ENCODE measurements at regions of chr6 and their contacts with region 1.

Region 1: GRCh38 chr6:31087494-31088089 is 24.8 kb downstream of the C6orf15 start:
- DNase-seq: peak; percentile 75 to 83 (median 81)
- H3K4me3 ChIP-seq: no peak overlapping the region
- H3K4me3 Mint-ChIP-seq: no peak overlapping the region
- H3K27ac ChIP-seq: no peak overlapping the region
- H3K27ac Mint-ChIP-seq: no peak overlapping the region
- H3K4me1 ChIP-seq: peaks cover 0 to 7% of the 10 kb centered on the region in 2 donors
- H3K4me1 Mint-ChIP-seq: peaks cover 11% of the 10 kb centered on the region
- H3K27me3 ChIP-seq: peaks cover 5 to 11% of the 10 kb centered on the region in 2 donors
- H3K27me3 Mint-ChIP-seq: peaks cover 4 to 11% (median 9%) of the 10 kb centered on the region in 3 donors
- CTCF ChIP-seq: peak; percentile 86

Region 2: GRCh38 chr6:30828027-30828960 is 259.3 kb before region 1 on chr6:
- intact Hi-C with region 1: loop called (anchors 5 kb)
- DNase-seq: peak; percentile 64 to 77 (median 77)
- H3K4me3 ChIP-seq: peak overlapping the region in 2 of 3 experiments; percentile 8 to 62
- H3K4me3 Mint-ChIP-seq: peak overlapping the region; percentile 68 to 77
- H3K27ac ChIP-seq: peak overlapping the region; percentile 5 to 46
- H3K27ac Mint-ChIP-seq: peak overlapping the region; percentile 31 to 90 (median 68)
- H3K4me1 ChIP-seq: peaks cover 59 to 68% of the 10 kb centered on the region in 2 donors
- H3K4me1 Mint-ChIP-seq: peaks cover 68% of the 10 kb centered on the region
- H3K27me3 ChIP-seq: no peaks in the 10 kb centered on the region
- H3K27me3 Mint-ChIP-seq: peaks cover 1 to 2% (median 2%) of the 10 kb centered on the region in 3 donors
- CTCF ChIP-seq: peak; percentile 86

Region 3: DNA sequence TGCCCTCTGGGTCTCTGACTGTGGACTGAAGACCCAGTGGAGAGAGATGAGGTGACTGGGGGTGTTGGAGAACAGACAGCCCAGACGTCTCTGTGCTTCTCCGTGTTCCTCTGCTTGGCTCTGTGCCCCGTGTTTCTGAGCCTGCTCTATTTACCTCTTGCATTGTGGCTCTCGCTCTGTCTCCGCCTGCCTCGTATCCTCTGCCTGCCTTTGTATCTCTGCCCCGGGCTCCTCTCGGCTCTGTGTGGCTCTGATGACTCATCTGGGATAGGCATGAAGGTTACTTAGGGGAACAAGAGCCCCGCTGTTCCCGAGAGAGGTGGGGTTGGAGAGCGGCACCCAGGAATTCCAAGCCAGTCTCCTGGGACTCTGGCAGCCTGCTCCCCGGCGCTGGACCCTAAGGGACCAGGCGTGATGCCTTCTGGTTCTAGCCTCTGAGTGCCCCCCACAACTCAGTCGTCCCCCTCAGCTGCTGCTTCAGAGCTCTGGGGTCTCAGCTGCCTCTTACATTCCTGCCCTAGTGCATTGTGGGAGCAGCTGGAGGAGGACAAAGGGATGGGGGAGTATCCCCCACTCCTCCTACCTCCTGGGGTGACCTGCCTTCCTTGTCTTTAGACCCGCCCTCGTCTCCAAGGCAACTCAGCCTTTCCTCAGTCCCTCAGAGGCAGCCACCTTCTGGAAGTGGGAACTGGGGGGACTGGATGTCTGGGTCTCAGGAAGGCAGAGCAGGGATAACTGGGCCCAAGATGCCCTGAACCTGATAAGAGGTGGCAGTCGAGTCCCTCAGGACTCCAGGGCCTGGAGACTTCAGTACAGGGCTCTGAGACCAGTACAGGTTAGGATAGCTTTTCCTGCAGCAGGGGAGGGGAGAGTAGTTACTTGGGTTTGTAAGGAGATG is 201.3 kb before region 1 on chr6:
- intact Hi-C with region 1: no loop called
- DNase-seq: no peak
- H3K4me3 ChIP-seq: no peak overlapping the region
- H3K4me3 Mint-ChIP-seq: peak overlapping the region in 1 of 2 donors; percentile 86
- H3K27ac ChIP-seq: no peak overlapping the region
- H3K27ac Mint-ChIP-seq: no peak overlapping the region
- H3K4me1 ChIP-seq: peaks cover 9 to 11% of the 10 kb centered on the region in 2 donors
- H3K4me1 Mint-ChIP-seq: peaks cover 23% of the 10 kb centered on the region
- H3K27me3 ChIP-seq: peaks cover 4 to 49% of the 10 kb centered on the region in 2 donors
- H3K27me3 Mint-ChIP-seq: peaks cover 31 to 58% (median 34%) of the 10 kb centered on the region in 3 donors
- CTCF ChIP-seq: no peak

Region 4: GRCh38 chr6:30914076-30914853 is 173.3 kb before region 1 on chr6 and contains the start of gene VARS2:
- intact Hi-C with region 1: loop called in 1 of 2 experiments (anchors 10 kb)
- DNase-seq: peak; percentile 80 to 83 (median 82)
- H3K4me3 ChIP-seq: peak within 1 kb of the TSS; percentile 62 to 90 (median 64)
- H3K4me3 Mint-ChIP-seq: peak within 1 kb of the TSS; percentile 94 to 96
- H3K27ac ChIP-seq: peak within 1 kb of the TSS; percentile 11 to 76
- H3K27ac Mint-ChIP-seq: peak within 1 kb of the TSS; percentile 61 to 88 (median 84)
- H3K4me1 ChIP-seq: peaks cover 15 to 26% of the 10 kb centered on the region in 2 donors
- H3K4me1 Mint-ChIP-seq: peaks cover 24% of the 10 kb centered on the region
- H3K27me3 ChIP-seq: no peaks in the 10 kb centered on the region
- H3K27me3 Mint-ChIP-seq: no peaks in the 10 kb centered on the region
- CTCF ChIP-seq: no peak
- polyA plus RNA-seq, gene VARS2: 7.6 to 15.5 (median 8.1) TPM